ENCODE measurements at regions of chr12 and their contacts with region 1.

Region 1: DNA sequence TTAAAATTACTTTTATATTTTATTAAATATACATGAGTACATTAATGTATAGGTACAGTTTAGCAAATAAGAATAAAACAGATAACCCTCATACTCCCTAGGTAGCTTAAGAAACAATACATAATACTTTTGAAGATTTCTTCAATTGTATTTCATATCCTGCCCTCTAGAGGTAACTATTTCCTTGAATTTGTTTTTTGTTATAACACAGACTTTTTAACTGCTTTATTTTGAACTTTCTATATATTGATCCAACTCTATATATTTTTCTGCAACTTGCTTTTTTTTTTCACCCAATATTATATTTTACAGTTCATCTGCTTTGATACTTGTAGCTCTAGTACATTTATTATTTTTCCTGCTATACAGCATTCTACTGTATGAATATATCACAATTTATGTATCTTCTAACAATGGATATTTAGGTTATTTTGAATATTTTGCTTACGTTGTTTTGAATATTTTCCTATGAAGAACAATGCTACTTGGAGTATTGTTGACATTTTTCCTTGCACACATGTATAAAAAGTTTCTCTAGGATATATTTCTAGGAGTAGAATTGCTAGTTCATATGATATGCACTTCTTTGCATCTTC is 72.8 kb upstream of the ABCD2 start:
- DNase-seq: no peak
- H3K4me3 Mint-ChIP-seq: no peak overlapping the region
- H3K27ac Mint-ChIP-seq: no peak overlapping the region
- H3K4me1 Mint-ChIP-seq: peaks cover 3% of the 10 kb centered on the region
- H3K27me3 Mint-ChIP-seq: peaks cover 6% of the 10 kb centered on the region

Region 2: GRCh38 chr12:39319187-39319586 is 373.2 kb before region 1 on chr12:
- intact Hi-C with region 1: loop called (anchors 5 kb)
- DNase-seq: no peak
- H3K4me3 Mint-ChIP-seq: no peak overlapping the region
- H3K27ac Mint-ChIP-seq: no peak overlapping the region
- H3K4me1 Mint-ChIP-seq: no peaks in the 10 kb centered on the region
- H3K27me3 Mint-ChIP-seq: no peaks in the 10 kb centered on the region

Region 3: DNA sequence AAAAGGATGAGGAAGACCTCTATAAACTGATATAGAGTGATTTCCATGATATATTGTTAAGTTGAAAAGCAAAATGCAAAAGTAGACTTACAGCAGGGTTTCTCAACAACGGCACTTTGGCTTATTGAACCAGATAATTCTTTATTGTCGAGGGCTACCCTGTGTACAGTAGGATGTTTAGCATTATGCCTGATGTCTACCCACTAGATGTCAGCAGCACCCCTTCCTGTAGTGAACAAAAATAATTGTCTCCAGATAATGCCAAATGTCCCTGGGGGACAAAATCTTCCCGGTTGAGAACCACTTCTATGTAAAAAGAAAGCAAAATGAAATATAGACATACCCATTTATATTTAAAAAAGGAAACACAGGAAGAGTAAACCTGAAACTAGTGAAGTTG is 105.1 kb before region 1 on chr12:
- intact Hi-C with region 1: loop called (anchors 1 kb)
- DNase-seq: no peak
- H3K4me3 Mint-ChIP-seq: no peak overlapping the region
- H3K27ac Mint-ChIP-seq: no peak overlapping the region
- H3K4me1 Mint-ChIP-seq: peaks cover 11% of the 10 kb centered on the region
- H3K27me3 Mint-ChIP-seq: no peaks in the 10 kb centered on the region

Region 4: DNA sequence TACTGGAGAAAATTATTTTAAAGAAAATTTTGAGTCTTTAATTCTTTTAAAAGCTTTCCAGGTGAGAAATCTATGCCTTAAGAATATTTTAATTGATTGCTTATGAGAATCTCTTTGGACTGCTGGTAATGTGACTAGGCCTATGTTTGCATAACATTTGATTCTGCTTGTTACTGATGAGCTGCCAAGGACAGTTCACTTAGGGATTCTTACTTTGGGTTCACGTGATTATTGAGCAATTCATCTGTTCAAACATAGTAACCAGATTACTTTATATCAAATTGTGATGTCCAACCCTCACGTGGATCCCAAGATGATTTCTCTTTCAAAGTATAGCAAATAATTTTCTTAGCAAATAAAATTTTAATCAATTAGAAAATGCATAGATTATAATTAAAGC is 45.4 kb before region 1 on chr12:
- intact Hi-C with region 1: loop called (anchors 5 kb)
- DNase-seq: no peak
- H3K4me3 Mint-ChIP-seq: no peak overlapping the region
- H3K27ac Mint-ChIP-seq: no peak overlapping the region
- H3K4me1 Mint-ChIP-seq: peaks cover 19% of the 10 kb centered on the region
- H3K27me3 Mint-ChIP-seq: no peaks in the 10 kb centered on the region

Region 5: DNA sequence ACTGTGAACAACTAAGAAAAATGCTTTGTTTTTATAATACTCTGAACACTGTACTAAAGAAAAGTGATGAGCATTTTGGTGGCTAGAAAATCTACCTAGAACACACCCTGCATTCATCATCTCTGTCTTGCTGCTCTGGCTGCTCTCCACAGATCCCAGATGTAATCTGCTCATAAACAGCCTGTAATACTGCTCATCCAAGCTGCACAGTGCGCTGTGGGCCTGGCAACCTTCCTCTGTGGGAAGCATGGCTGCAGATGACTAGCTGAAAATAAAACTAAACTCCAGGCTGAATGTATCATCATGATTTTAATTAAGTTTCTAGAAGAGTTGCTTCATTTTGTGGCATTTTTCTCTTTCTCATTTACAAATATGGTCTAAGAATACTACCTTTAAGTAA is 212.8 kb after region 1 on chr12:
- intact Hi-C with region 1: no loop called
- DNase-seq: no peak
- H3K4me3 Mint-ChIP-seq: no peak overlapping the region
- H3K27ac Mint-ChIP-seq: no peak overlapping the region
- H3K4me1 Mint-ChIP-seq: no peaks in the 10 kb centered on the region
- H3K27me3 Mint-ChIP-seq: no peaks in the 10 kb centered on the region